Activated CD4-positive, alpha-beta memory T cell treated with anti-CD3 and anti-CD28 coated beads for 36 hours (primary cell): ENCODE measurements at regions of chr15 and their contacts with region 1.

Region 1: DNA sequence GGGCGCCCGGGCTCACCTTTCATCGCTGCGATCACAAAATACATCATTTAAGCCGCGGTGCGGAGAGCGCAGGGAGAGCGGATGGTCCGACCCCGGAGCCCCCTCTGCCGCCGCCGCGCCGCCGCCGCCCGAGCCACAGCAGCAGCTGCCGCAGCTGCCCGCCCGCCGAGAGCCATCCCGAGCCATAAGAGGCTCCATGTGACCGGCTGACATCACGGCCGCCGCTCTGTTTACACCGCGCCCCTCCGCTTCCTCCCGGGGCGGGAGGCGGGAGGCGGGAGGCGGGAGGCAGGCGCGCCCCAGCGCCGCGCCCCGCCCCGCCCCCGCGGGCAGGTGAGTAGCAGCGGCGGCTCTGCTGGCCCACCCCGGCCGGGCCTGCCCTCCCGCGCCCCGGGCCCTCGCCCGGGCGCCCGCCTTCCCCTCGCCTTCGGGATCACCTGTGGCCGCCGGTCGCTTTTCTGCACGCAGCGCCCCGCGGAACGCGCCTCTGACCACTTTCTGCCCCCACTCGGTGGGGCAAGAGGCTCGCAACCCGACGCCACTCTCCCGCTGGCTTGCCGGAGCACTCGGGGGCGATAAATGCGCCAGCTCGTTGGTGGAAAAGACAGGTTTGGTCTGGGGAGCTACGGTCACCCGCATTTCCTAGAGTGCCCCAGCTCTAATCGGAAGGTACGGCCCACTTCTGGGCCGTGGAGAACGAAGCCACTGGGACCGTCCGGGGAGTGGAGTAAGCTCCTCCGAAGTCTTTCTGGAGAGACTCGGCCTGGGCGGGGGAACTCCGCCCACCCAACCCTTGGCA is 113.6 kb upstream of the ICE2 start:
- DNase-seq: peak; percentile 91
- H3K4me3 Mint-ChIP-seq: peak overlapping the region; percentile 81
- H3K27ac Mint-ChIP-seq: peak overlapping the region; percentile 82
- H3K4me1 Mint-ChIP-seq: peaks cover 45% of the 10 kb centered on the region
- H3K27me3 Mint-ChIP-seq: no peaks in the 10 kb centered on the region

Region 2: GRCh38 chr15:60351066-60351465 is 241.5 kb before region 1 on chr15:
- CTCF ChIA-PET with region 1: no interaction called
- POLR2A ChIA-PET with region 1: no interaction called
- intact Hi-C with region 1: no loop called
- DNase-seq: no peak
- H3K4me3 Mint-ChIP-seq: no peak overlapping the region
- H3K27ac Mint-ChIP-seq: no peak overlapping the region
- H3K4me1 Mint-ChIP-seq: peaks cover 4% of the 10 kb centered on the region
- H3K27me3 Mint-ChIP-seq: no peaks in the 10 kb centered on the region

Region 3: DNA sequence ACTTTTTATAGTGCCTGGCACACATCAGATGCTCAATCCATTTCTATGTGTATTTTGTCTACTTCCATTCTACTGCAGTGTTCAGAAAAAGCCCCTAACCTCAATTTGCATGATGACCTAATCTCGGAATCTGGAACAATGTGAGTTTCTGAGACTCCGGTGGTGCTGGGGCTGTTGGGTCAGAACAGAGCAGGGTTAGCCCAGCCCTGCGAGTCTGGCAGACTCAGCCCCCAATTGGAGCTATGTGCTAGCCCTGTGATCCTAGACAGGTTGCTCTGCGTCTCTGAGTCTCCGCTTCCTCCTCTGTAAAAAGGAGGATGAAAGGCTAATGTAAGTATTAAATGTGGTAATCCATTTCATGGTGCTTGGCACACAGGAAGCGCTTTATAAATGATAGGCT is 18.6 kb before region 1 on chr15:
- CTCF ChIA-PET with region 1: interaction called, 24 read pairs
- POLR2A ChIA-PET with region 1: interaction called, 28 read pairs
- intact Hi-C with region 1: no loop called
- DNase-seq: peak; percentile 68
- H3K4me3 Mint-ChIP-seq: peak overlapping the region; percentile 64
- H3K27ac Mint-ChIP-seq: peak overlapping the region; percentile 85
- H3K4me1 Mint-ChIP-seq: peaks cover 88% of the 10 kb centered on the region
- H3K27me3 Mint-ChIP-seq: no peaks in the 10 kb centered on the region

Region 4: GRCh38 chr15:60611592-60612346 is 19.2 kb after region 1 on chr15:
- CTCF ChIA-PET with region 1: no interaction called
- POLR2A ChIA-PET with region 1: no interaction called
- intact Hi-C with region 1: no loop called
- DNase-seq: no peak
- H3K4me3 Mint-ChIP-seq: no peak overlapping the region
- H3K27ac Mint-ChIP-seq: no peak overlapping the region
- H3K4me1 Mint-ChIP-seq: peaks cover 12% of the 10 kb centered on the region
- H3K27me3 Mint-ChIP-seq: peaks cover 2% of the 10 kb centered on the region